Activated naive CD4-positive, alpha-beta T cell treated with anti-CD3 and anti-CD28 coated beads for 36 hours (primary cell): ENCODE measurements at regions of chr14 and their contacts with region 1.

Region 1: GRCh38 chr14:77097700-77098528 is at the start of gene CIPC:
- DNase-seq: peak; percentile 100
- H3K4me3 Mint-ChIP-seq: peak within 1 kb of the TSS; percentile 88
- H3K27ac Mint-ChIP-seq: peak within 1 kb of the TSS; percentile 96
- H3K4me1 Mint-ChIP-seq: peaks cover 38% of the 10 kb centered on the region
- H3K27me3 Mint-ChIP-seq: no peaks in the 10 kb centered on the region
- total RNA-seq, gene CIPC: 5.6 to 6.1 TPM

Region 2: GRCh38 chr14:75982266-75983018 is 1115.5 kb before region 1 on chr14:
- CTCF ChIA-PET with region 1: no interaction called
- intact Hi-C with region 1: loop called (anchors 2 kb)
- DNase-seq: peak; percentile 81
- H3K4me3 Mint-ChIP-seq: peak overlapping the region; percentile 77
- H3K27ac Mint-ChIP-seq: no peak overlapping the region
- H3K4me1 Mint-ChIP-seq: peaks cover 43% of the 10 kb centered on the region
- H3K27me3 Mint-ChIP-seq: no peaks in the 10 kb centered on the region

Region 3: GRCh38 chr14:76812211-76813044 is 285.5 kb before region 1 on chr14 and contains the start of gene ANGEL1:
- CTCF ChIA-PET with region 1: interaction called, 3 read pairs
- intact Hi-C with region 1: loop called (anchors 1 kb)
- DNase-seq: peak; percentile 97
- H3K4me3 Mint-ChIP-seq: peak within 1 kb of the TSS; percentile 91
- H3K27ac Mint-ChIP-seq: peak within 1 kb of the TSS; percentile 81
- H3K4me1 Mint-ChIP-seq: peaks cover 24% of the 10 kb centered on the region
- H3K27me3 Mint-ChIP-seq: no peaks in the 10 kb centered on the region
- total RNA-seq, gene ANGEL1: 17.0 to 19.8 TPM

Region 4: DNA sequence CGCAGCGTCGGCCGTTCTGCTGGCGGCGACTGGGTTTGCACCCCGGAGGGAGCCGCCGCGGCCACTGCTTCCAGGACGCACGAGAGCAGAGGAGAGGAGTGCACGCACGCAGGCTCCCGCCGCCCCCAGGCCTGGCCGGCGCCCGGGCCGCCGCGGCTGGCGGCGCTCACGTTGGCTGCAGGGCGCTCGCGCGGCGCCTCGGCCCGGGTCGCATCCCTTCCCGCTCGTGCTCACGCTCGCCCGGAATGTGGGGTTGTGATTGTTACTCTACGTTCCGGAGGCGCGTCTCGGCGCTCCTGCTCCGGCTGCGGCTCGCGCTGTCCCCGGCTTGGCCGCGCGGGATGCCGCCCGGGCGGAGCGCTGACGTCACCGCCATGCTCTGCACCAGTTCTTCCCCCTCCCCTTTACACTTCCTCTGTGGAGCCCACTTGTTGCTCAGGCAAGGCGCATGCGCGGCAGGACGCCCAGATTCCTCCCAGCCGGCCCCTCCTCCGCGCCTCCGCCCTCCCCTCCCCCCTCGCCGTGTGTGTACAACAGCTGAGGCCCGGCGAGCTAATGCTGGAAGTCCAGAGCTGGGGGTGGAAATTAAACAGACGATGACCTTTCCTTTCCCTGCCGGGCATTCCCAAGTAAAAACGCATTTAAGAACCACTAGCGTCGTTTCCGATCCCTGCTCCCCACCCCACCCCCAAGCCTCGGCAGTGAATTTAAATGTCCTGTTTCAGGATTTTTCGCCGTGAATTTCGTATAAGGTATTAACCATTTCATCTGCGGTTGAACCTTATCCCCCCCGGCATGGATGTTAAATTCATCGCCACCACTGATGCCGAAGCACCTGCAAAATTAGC is 69.3 kb before region 1 on chr14 and contains the start of gene IRF2BPL:
- CTCF ChIA-PET with region 1: no interaction called
- intact Hi-C with region 1: loop called (anchors 2 kb)
- DNase-seq: peak; percentile 96
- H3K4me3 Mint-ChIP-seq: peak within 1 kb of the TSS; percentile 82
- H3K27ac Mint-ChIP-seq: peak within 1 kb of the TSS; percentile 94
- H3K4me1 Mint-ChIP-seq: peaks cover 57% of the 10 kb centered on the region
- H3K27me3 Mint-ChIP-seq: no peaks in the 10 kb centered on the region
- total RNA-seq, gene IRF2BPL: 34.8 to 35.2 TPM

Region 5: GRCh38 chr14:77124345-77125280 is 26.7 kb after region 1 on chr14:
- CTCF ChIA-PET with region 1: interaction called, 17 read pairs
- intact Hi-C with region 1: loop called (anchors 1 kb)
- DNase-seq: peak; percentile 69
- H3K4me3 Mint-ChIP-seq: peak overlapping the region; percentile 77
- H3K27ac Mint-ChIP-seq: peak overlapping the region; percentile 42
- H3K4me1 Mint-ChIP-seq: peaks cover 36% of the 10 kb centered on the region
- H3K27me3 Mint-ChIP-seq: peaks cover 16% of the 10 kb centered on the region

Region 6: DNA sequence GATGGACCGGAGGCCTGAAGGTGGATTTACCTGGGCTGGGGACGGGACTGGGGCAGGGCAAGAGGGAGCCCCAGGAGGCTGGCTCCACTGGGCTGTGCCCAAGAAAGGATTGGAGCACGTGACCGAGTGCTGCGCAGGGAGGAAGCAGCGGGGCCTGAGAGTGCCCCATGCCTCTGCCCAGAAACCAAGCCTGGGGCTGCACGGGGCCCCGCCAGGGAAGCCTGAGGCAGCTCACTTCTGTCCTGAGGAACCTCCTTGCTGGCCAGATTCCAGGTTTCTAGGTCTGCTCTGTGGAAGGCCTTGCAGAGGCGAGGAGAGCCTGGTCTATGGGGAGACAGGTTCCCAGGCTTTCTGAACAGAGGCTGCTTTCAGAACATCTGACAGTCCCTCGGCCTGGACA is 162.7 kb after region 1 on chr14:
- CTCF ChIA-PET with region 1: no interaction called
- intact Hi-C with region 1: no loop called
- DNase-seq: no peak
- H3K4me3 Mint-ChIP-seq: no peak overlapping the region
- H3K27ac Mint-ChIP-seq: no peak overlapping the region
- H3K4me1 Mint-ChIP-seq: no peaks in the 10 kb centered on the region
- H3K27me3 Mint-ChIP-seq: peaks cover 7% of the 10 kb centered on the region

Region 7: DNA sequence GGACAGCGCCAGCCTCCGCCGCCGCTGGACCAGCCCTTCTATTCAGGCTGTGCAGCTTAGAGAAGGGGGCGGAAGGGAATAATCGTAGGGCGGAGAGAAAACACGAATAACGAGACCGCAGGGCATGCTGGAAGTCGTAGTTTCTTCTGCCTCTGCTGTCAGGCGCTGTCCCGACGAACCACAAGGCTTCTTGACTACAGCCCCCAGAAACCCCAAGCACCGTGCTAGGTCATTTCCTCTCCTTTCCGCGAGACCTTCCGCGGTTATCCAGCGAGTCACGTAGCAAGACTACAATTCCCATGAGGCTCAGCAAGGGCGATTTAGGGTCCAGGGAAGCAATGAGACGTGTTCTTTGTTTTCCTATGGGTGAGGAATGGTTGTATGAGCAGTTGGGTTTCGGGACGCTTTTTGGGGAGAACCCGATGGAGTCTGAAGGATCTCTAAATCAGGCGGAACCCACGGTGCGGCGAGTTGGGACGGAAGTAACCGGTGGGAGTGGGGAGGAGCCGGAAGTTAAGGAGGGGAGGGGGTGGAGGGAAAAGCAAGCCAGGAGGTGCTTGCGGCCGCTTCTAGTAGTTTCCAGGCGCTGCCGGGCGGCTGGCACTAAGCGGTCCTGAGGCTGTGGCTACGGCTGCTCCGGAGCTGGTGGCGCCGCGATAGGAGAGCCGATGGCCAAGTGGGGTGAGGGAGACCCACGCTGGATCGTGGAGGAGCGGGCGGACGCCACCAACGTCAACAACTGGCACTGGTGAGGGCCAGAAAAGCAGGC is 359.8 kb after region 1 on chr14 and contains the starts of genes AHSA1 and VIPAS39:
- CTCF ChIA-PET with region 1: interaction called, 3 read pairs
- intact Hi-C with region 1: loop called (anchors 1 kb)
- DNase-seq: peak; percentile 98
- H3K4me3 Mint-ChIP-seq: peak within 1 kb of the TSS; percentile 100
- H3K27ac Mint-ChIP-seq: peak within 1 kb of the TSS; percentile 100
- H3K4me1 Mint-ChIP-seq: peaks cover 32% of the 10 kb centered on the region
- H3K27me3 Mint-ChIP-seq: no peaks in the 10 kb centered on the region
- total RNA-seq, gene AHSA1: 230 to 246 TPM
- total RNA-seq, gene VIPAS39: 12.3 to 13.3 TPM